PC-9 (cell line): ENCODE measurements at regions of chr10 and their contacts with region 1.

Region 1: GRCh38 chr10:102815790-102816549 is 21.2 kb downstream of the CYP17A1 start:
- DNase-seq: no peak
- H3K4me3 ChIP-seq: no peak overlapping the region
- H3K27ac ChIP-seq: no peak overlapping the region
- H3K4me1 ChIP-seq: peaks cover 19% of the 10 kb centered on the region
- H3K27me3 ChIP-seq: no peaks in the 10 kb centered on the region
- CTCF ChIP-seq: no peak

Region 2: GRCh38 chr10:102743588-102744373 is 72.2 kb before region 1 on chr10 and contains the start of gene WBP1L:
- CTCF ChIA-PET with region 1: no interaction called
- POLR2A ChIA-PET with region 1: no interaction called
- intact Hi-C with region 1: loop called (anchors 5 kb)
- DNase-seq: peak; percentile 89 to 96
- H3K4me3 ChIP-seq: peak within 1 kb of the TSS; percentile 86
- H3K27ac ChIP-seq: no peak within 1 kb of the TSS
- H3K4me1 ChIP-seq: 0 out of 2 replicates have a peak, but pooled peaks cover 12% of the 10 kb centered on the region
- H3K27me3 ChIP-seq: no peaks in the 10 kb centered on the region
- CTCF ChIP-seq: no peak
- total RNA-seq, gene WBP1L: 16.2 and 19.7 TPM in 2 replicates

Region 3: DNA sequence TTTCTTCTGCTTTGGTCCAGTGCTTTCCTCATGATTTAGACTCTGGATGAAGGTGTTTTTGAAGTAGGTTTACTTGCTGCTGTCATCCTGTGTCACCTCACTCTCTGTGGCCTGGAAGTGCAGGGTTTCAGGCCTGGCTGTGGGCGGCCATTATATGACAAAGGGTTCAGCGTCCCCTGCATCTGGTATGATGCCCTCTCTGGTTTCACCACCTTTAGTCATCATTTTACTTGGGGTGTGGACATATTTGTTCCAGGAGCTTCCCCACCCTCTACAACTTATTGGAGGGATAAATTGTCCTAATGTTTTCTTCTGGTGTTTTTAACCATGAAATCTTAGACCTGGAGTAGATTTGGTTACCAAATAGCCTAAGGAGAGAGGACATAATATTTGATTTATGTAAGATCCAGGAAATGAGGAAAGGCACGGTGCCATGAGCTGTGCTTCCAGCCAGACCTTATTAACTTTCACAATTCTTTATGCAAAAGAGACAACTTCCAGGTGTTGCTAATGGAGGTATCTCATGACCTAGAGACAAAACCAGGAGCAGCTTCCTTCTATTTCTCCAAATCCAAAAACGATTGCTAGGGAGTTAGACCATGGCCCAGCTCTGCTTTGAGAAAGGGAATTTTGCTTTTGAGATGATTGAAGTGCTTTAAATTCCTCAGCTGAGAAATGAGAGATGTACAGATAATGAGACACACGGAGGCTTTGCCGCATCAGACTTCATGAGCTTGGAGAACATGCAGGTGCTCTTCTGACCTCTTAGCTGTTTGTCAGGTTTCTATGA is 51.4 kb before region 1 on chr10:
- CTCF ChIA-PET with region 1: no interaction called
- POLR2A ChIA-PET with region 1: no interaction called
- intact Hi-C with region 1: loop called (anchors 5 kb)
- DNase-seq: peak; percentile 18 to 57
- H3K4me3 ChIP-seq: no peak overlapping the region
- H3K27ac ChIP-seq: peak overlapping the region; percentile 34; the same call in 1 of the 2 replicates
- H3K4me1 ChIP-seq: peaks cover 6% of the 10 kb centered on the region; the same call in 1 of the 2 replicates
- H3K27me3 ChIP-seq: no peaks in the 10 kb centered on the region
- CTCF ChIP-seq: no peak

Region 4: DNA sequence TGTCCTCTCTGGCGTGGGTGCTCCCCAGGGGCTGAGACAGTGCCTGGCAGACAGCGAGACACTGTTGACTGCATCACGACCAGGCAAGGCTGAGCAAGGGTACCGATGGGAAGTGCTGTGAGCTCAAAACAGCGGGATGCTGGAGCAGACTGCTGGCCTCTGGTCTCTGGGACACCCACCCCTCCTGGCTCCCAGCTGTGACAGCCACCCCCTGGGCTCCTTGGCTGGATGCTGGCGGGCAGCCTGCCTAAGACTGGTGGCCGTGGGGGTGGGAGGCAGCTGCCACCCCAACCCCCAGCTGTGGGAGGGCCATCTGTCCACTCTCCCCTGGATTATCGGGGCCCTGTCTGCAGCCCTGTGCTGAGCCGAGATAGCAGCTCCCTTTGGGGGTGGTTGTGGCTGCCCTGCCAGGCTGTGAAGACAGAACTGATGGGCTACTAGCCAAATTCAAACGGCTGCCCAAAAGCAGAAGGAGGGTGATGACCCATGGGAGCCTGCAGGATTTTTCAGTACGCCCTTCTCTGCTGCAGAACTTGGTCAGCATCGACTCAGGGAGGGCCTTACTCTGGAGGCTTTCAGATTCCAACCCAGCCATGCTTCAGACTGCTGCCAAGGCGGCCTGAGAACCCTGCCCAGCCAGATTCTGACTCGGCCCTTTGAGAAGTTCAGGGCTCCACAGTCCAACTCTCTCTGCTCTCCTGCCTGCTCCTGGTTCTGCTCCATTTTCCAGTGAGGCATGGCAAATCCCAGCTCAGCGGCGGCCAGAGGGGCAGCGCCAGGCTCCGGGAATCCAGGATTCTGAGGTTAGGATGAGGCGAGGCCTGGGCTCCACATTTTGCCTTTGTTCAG is 802.8 kb after region 1 on chr10:
- CTCF ChIA-PET with region 1: no interaction called
- POLR2A ChIA-PET with region 1: no interaction called
- intact Hi-C with region 1: no loop called
- DNase-seq: no peak
- H3K4me3 ChIP-seq: no peak overlapping the region
- H3K27ac ChIP-seq: no peak overlapping the region
- H3K4me1 ChIP-seq: no peaks in the 10 kb centered on the region
- H3K27me3 ChIP-seq: no peaks in the 10 kb centered on the region
- CTCF ChIP-seq: no peak